ENCODE measurements at regions of chr15 and their contacts with region 1.

Region 1: DNA sequence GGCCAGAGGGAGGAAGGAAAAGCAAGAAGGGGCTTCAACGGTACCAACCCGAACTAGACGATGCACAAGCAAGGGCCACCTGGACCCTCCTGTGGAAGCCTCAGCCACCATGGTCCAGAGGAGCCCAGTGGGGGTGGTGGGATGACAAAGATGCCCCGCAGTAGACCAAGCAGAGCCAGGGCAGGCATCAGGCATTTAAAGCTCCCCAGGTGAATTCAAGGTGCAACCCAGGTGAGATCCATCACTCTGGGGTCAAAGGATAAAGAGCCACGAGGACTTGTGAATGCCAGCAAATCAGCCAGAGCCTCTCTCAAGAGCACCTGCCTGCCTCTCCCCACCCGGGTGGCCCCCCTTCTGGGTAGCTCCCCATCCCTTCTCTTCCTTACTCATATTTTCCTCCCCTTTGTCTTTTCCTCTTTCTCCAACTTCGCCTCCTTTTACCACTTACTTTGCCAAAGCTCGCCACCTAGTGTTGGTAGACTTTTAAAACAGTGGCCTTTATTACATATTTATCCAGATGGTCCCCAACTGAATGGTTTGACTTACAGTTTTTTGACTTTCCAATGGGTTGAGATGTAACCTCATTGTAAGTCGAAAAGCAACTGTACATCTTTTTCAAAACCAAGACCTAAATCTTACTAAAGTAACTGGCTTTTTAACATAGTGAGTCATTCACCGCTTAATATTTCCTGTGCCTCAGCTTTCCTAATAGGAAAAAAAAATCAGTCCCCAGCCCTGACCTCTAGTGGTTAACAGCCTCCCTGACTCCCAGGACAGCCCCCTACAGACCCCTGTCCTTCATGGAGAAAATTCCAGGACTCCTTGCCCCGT is 18.8 kb downstream of the PLA2G4F start:
- DNase-seq: peak; percentile 15
- H3K4me3 Mint-ChIP-seq: no peak overlapping the region
- H3K27ac Mint-ChIP-seq: no peak overlapping the region
- H3K4me1 Mint-ChIP-seq: no peaks in the 10 kb centered on the region
- H3K27me3 Mint-ChIP-seq: peaks cover 3% of the 10 kb centered on the region

Region 2: DNA sequence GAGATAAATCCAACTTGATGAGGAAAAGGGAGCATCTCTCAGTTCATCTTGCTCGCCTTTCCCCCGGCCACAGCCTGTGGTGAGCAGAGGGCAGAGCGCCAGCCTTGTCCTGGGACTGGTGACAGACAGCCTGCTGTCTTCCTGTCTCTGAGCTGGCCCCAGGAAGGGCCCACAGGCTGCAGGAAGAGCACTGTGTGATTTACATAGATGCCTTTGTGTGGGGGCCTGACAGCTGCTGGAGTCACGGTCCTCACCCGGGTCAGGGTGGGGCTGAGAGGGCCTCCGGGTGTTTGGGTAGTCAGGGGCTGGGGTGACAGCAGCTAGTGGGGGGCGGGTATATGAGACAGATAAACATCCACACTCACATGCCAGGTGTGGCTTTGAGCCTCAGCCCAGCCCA is 72.6 kb before region 1 on chr15:
- CTCF ChIA-PET with region 1: interaction called, 21 read pairs
- POLR2A ChIA-PET with region 1: interaction called, 3 read pairs
- intact Hi-C with region 1: loop called (anchors 1 kb)
- DNase-seq: no peak
- H3K4me3 Mint-ChIP-seq: no peak overlapping the region
- H3K27ac Mint-ChIP-seq: no peak overlapping the region
- H3K4me1 Mint-ChIP-seq: peaks cover under 1% of the 10 kb centered on the region
- H3K27me3 Mint-ChIP-seq: peaks cover 16% of the 10 kb centered on the region

Region 3: GRCh38 chr15:42385206-42385979 is 247.7 kb after region 1 on chr15:
- CTCF ChIA-PET with region 1: no interaction called
- POLR2A ChIA-PET with region 1: no interaction called
- intact Hi-C with region 1: loop called (anchors 1 kb)
- DNase-seq: peak; percentile 57
- H3K4me3 Mint-ChIP-seq: no peak overlapping the region
- H3K27ac Mint-ChIP-seq: no peak overlapping the region
- H3K4me1 Mint-ChIP-seq: no peaks in the 10 kb centered on the region
- H3K27me3 Mint-ChIP-seq: no peaks in the 10 kb centered on the region

Measured in activated CD4-positive, alpha-beta memory T cell treated with anti-CD3 and anti-CD28 coated beads for 36 hours (primary cell).